Activated CD4-positive, alpha-beta T cell treated with anti-CD3 and anti-CD28 coated beads for 36 hours (primary cell): ENCODE measurements at regions of chr17 and their contacts with region 1.

Region 1: DNA sequence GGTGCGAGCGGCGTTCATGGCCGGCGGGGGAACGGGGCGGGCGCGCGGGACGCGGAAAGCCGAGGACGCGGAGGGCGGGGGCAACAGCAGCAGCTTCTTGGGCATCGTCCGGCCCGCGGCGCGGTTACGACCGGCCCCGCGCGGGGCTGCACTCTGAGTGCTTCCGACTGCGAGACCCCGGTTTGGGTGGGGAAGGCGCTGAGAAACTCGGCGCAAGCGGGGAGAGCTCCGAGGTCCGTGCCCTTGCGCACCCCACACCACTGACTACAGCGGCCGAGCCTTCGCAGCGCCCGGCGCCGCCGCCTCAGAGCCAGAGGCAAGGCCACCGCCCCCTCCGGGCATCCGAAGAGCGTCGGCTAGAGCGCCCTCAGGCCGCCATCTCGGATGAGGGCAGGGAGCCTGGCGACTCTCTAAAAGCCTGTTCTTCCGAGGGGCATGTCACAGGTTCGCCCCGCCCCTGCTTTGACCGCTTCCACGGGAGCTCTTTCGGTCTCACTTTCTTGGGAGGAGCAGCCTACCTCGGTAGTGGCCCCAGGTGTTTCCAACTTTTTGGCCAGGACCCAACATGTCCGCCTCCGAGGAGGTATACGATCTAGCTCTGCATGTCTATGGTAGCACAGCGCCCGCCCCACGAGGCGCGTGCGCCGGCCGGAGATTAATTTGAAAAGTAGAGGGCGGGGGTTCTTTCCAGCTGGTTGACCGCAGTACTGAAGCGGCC is at the start of gene PRPSAP1:
- DNase-seq: peak; percentile 88
- ATAC-seq: peak; percentile 97
- H3K4me3 Mint-ChIP-seq: peak within 1 kb of the TSS; percentile 78
- H3K27ac Mint-ChIP-seq: peak within 1 kb of the TSS; percentile 96
- H3K4me1 Mint-ChIP-seq: peaks cover 18% of the 10 kb centered on the region
- H3K27me3 Mint-ChIP-seq: no peaks in the 10 kb centered on the region
- total RNA-seq, gene PRPSAP1: 26.7 to 34.9 TPM

Region 2: GRCh38 chr17:75940724-75941441 is 412.9 kb before region 1 on chr17 and contains the start of gene FBF1:
- CTCF ChIA-PET with region 1: interaction called, 3 read pairs
- POLR2A ChIA-PET with region 1: no interaction called
- intact Hi-C with region 1: loop called in 1 of 2 experiments (anchors 2 kb)
- DNase-seq: peak; percentile 94
- ATAC-seq: peak; percentile 100
- H3K4me3 Mint-ChIP-seq: peak within 1 kb of the TSS; percentile 92
- H3K27ac Mint-ChIP-seq: peak within 1 kb of the TSS; percentile 82
- H3K4me1 Mint-ChIP-seq: peaks cover 13% of the 10 kb centered on the region
- H3K27me3 Mint-ChIP-seq: no peaks in the 10 kb centered on the region
- total RNA-seq, gene FBF1: 16.2 to 18.0 TPM

Region 3: DNA sequence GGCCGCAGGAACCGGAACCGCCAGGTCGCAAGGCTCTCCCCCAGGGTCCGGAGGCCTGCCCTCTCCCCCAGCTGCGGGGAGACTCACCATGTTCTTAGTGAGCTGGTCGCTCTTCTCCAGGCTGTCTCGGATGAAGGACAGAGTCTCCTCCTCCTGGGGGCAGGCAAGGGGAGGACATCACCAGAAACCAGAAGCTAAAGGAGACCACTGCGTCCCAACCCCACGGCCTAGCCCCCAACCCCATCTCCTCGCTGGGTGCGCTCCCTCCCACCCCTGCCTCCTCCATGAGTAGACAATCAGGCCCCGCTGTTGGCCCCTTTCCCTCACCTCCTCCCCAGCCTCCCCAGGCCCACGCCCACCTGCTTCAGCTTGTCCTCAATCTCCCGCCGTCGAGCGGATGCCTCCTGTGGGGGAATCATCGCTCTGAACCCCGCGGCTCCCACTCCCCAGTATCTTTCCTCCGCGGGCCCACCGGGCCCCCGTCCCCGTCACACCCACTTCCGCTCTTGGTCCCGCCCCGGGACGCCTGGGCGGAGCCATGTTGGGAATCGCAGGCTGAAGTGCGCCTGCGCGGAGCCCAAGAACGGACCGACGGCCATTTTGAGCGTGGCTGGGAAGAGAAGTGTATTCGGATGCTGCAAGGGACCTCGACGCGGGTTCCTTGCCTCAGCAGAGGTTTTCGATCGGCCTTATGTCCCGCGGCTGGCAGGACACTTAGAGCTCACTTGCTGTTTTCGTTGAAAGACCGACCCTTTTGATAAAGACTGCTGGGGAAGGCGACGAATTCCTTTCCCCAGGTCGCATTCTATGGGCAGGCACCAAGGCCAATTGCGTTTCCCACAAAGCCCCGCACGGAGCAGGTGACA is 250.3 kb before region 1 on chr17 and contains the start of gene EXOC7:
- CTCF ChIA-PET with region 1: interaction called, 3 read pairs
- POLR2A ChIA-PET with region 1: no interaction called
- intact Hi-C with region 1: loop called in 1 of 2 experiments (anchors 1 kb)
- DNase-seq: peak; percentile 96
- ATAC-seq: peak; percentile 94
- H3K4me3 Mint-ChIP-seq: peak within 1 kb of the TSS; percentile 90
- H3K27ac Mint-ChIP-seq: peak within 1 kb of the TSS; percentile 93
- H3K4me1 Mint-ChIP-seq: peaks cover 18% of the 10 kb centered on the region
- H3K27me3 Mint-ChIP-seq: no peaks in the 10 kb centered on the region
- total RNA-seq, gene EXOC7: 73.0 to 77.0 TPM

Region 4: DNA sequence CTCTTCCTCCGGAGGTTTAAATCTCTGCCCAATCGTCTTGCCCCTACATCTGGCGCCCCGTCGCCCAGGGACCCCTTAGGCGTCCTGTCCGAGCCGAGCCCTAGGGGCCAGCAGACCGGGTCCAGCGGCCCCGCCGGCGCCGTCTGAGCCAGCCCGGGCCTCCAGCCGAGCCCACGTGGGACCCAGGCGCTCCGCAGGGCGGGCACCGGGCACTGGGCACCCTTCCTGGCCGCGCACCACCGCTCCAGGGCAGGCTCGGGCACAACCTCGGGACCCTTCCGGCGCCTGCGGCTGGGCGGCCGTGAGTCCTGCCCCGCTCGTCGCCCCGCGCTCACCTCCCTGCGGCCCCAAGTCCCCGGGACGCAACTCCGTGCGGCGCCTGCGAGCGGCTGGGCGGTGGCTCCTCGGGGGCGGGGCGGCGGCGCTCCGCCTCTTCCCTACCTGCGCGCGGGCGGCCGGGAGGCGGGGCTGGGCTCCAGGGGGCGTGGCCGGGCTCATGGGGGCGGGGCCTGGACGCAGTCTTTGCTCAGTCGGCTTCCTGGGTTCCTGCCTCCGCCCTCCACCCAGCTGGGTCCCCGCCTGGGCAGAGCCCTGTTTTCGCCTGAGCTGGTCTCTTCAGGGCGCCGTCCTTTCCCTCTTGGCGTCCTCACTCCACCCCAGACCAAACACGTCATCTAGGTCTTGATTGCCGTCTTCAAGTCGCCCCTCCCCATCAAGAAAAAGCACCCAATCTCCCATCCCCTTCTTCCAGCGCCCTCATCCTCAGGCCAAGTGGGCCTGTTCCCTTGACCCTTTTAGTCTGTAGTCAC is 147.5 kb after region 1 on chr17 and contains the start of gene RHBDF2:
- CTCF ChIA-PET with region 1: no interaction called
- POLR2A ChIA-PET with region 1: no interaction called
- intact Hi-C with region 1: loop called in 1 of 2 experiments (anchors 1 kb)
- DNase-seq: peak; percentile 98
- ATAC-seq: peak; percentile 91
- H3K4me3 Mint-ChIP-seq: peak within 1 kb of the TSS; percentile 87
- H3K27ac Mint-ChIP-seq: peak within 1 kb of the TSS; percentile 94
- H3K4me1 Mint-ChIP-seq: peaks cover 29% of the 10 kb centered on the region
- H3K27me3 Mint-ChIP-seq: no peaks in the 10 kb centered on the region
- total RNA-seq, gene RHBDF2: 23.9 to 28.4 TPM

Region 5: GRCh38 chr17:76726231-76726775 is 372.5 kb after region 1 on chr17 and contains the start of gene JMJD6:
- CTCF ChIA-PET with region 1: no interaction called
- POLR2A ChIA-PET with region 1: no interaction called
- intact Hi-C with region 1: loop called in 1 of 2 experiments (anchors 1 kb)
- DNase-seq: peak; percentile 97
- ATAC-seq: peak; percentile 87
- H3K4me3 Mint-ChIP-seq: peak within 1 kb of the TSS; percentile 97
- H3K27ac Mint-ChIP-seq: peak within 1 kb of the TSS; percentile 98
- H3K4me1 Mint-ChIP-seq: peaks cover 54% of the 10 kb centered on the region
- H3K27me3 Mint-ChIP-seq: no peaks in the 10 kb centered on the region
- total RNA-seq, gene JMJD6: 51.3 to 65.5 TPM